PC-9 (cell line): ENCODE measurements at regions of chr4 and their contacts with region 1.

Region 1: DNA sequence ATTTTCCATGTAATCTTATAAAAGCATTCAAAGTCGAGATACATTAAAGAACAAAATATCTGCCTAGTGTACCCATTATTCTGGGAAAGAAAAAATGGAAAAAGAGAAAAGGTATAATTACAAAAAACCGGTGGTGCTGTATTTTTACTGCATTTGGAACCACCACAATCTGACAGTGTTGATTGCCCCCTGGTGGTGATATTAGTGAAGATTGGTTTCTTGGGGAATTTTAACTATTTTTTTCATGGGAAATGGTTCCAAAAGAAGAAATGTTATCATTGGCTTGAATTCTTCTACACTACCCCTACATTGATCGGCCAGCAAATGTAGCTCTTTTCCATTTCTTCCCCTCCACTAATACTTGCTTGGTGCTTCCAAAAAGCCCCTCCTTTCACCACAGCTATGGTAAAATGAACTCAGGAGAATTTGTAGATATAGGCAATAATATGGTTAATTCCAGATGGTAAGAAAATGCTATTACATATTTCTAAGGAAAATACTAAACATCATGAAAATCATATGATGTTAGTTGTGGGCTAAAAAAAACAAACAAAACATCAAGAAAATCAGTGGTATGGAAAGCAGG is 50.0 kb downstream of the COX18 start:
- DNase-seq: peak in 1 of 2 experiments; percentile 2
- H3K4me3 ChIP-seq: no peak overlapping the region
- H3K27ac ChIP-seq: no peak overlapping the region
- H3K4me1 ChIP-seq: no peaks in the 10 kb centered on the region
- H3K27me3 ChIP-seq: no peaks in the 10 kb centered on the region
- CTCF ChIP-seq: peak; percentile 77

Region 2: DNA sequence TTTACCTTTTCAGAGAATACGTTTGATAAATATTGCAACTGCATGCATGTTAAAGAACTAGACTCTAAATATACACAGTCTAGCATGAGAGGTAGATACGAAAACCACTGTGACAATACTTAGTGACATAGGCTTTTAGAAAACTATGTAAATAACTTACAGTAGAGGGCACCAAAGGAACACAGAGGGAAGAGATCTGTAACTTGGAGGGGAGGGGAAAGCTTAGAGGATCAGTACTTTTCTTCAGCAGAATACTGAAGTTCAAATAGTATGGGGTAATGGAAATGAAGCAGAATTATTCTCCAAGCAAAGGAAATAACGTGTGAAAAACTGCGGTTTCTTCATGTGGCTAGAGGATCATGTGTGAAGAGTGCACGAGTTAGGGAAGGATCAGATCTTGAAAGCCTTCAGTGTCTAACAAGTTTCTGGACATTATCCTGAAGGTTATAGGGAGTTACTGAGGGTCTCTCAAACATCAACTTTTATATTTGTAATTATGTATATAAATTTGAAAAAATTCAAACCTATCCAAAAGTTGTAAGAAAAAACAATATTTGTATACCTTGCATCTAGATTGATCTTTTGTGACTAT is 723.5 kb before region 1 on chr4:
- CTCF ChIA-PET with region 1: no interaction called
- POLR2A ChIA-PET with region 1: no interaction called
- intact Hi-C with region 1: loop called (anchors 1 kb)
- DNase-seq: no peak
- H3K4me3 ChIP-seq: no peak overlapping the region
- H3K27ac ChIP-seq: no peak overlapping the region
- H3K4me1 ChIP-seq: no peaks in the 10 kb centered on the region
- H3K27me3 ChIP-seq: no peaks in the 10 kb centered on the region
- CTCF ChIP-seq: peak; percentile 69

Region 3: GRCh38 chr4:72326692-72327632 is 692.6 kb before region 1 on chr4:
- CTCF ChIA-PET with region 1: no interaction called
- POLR2A ChIA-PET with region 1: no interaction called
- intact Hi-C with region 1: loop called (anchors 1 kb)
- DNase-seq: no peak
- H3K4me3 ChIP-seq: no peak overlapping the region
- H3K27ac ChIP-seq: no peak overlapping the region
- H3K4me1 ChIP-seq: no peaks in the 10 kb centered on the region
- H3K27me3 ChIP-seq: no peaks in the 10 kb centered on the region
- CTCF ChIP-seq: peak; percentile 67

Region 4: DNA sequence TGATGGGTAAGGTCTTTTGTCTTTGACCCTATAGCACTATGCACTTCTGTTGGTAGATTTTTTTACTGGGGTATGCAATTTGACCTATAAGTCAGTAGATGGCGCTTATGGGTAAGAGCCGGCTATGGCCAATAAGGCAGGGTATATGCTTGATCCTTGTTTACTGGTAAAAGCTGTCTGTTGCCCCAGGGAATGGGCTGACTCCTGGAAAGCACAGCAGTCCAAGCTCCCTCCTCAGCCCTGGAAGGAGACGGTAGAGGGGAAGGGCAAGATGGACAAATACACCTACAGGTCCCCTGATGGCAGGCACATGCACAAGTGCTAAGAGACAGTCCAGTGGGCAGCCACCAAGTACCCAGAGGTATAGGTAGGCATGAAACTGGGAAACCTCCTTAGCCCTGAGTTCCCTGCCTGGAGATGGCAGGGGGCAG is 514.2 kb before region 1 on chr4:
- CTCF ChIA-PET with region 1: no interaction called
- POLR2A ChIA-PET with region 1: no interaction called
- intact Hi-C with region 1: loop called (anchors 5 kb)
- DNase-seq: peak; percentile 2 to 33
- H3K4me3 ChIP-seq: no peak overlapping the region
- H3K27ac ChIP-seq: no peak overlapping the region
- H3K4me1 ChIP-seq: no peaks in the 10 kb centered on the region
- H3K27me3 ChIP-seq: no peaks in the 10 kb centered on the region
- CTCF ChIP-seq: peak; percentile 72

Region 5: DNA sequence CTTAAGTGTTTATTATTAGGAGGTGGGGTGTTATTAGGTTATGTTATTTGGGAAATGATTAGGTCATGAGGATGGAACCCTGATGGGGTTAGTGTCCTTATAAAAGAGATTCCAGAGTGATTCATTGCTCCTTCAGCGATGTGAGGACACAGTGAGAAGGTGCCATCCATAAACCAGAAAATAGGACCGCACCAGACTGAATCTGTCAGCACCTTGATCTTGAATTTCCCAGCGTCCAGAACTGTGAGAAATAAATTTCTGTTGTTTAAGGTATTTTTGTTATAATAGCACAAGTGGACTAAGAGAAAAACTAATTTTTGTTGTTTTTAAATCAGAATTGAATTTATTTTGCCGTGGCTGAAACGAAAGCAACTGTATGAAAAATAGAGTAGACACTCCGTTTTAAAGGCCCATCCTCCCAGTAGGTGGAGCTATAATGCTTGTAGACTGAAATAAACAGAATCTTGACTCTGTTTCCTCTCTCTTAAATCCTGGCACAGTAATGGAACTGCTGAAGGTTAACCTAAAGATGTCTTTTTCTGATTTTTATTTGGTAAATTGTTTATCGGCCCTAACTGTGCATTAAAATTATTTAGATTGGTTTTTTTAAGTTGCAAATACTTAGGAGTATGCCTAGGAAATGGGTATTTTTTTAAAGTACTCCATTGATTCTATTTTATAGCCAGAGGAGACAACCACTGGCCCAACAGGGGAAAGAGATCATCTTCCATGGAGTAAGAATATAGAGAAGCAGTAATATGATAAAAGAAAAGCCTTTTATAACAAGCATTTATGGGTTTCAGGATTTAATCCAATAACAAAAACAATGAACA is 317.4 kb before region 1 on chr4:
- CTCF ChIA-PET with region 1: no interaction called
- POLR2A ChIA-PET with region 1: no interaction called
- intact Hi-C with region 1: loop called (anchors 1 kb)
- DNase-seq: no peak
- H3K4me3 ChIP-seq: peak overlapping the region; percentile 43; the same call in 1 of the 2 replicates
- H3K27ac ChIP-seq: no peak overlapping the region
- H3K4me1 ChIP-seq: no peaks in the 10 kb centered on the region
- H3K27me3 ChIP-seq: no peaks in the 10 kb centered on the region
- CTCF ChIP-seq: peak; percentile 65